ENCODE measurements at regions of chr6 and their contacts with region 1.

Region 1: DNA sequence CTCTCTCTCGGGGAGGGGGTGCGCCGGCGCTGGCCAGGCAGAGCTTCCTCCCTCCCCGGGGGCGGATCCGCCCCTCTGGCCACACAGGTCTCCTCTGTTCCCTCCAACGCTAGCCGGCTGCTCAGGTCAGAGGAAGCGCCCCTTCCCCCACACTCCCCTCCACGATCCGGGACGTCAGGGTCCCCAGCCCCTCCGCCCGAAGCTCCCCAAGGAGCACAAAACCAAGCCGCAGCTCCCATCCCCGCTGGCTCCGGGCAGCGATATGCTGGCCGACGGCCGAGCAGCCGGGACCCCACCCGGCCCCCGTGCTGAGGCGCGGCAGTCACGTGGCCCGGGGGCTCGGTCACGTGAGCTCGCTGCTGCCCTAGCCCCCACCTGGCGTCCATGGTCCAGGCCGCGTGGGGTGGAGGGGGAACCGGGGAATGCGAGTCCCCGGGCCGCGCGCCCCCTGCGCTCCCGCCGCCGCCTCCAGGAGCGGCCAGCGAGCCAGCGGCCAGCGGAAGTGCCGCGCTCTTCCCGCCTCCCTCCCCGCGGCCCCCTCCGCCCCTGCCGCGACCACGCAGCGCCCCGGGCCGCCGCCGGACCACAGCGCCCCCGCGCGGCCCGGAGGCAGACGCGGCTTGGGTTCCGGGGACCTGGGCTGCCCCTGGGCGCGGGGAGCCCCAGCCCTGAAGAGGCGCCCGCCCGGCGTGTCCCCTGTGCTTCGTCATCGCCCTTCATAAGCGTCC is at the start of gene SLC35B2:
- DNase-seq: peak; percentile 69
- total RNA-seq, gene SLC35B2: 73.4 and 80.4 TPM in 2 replicates

Region 2: DNA sequence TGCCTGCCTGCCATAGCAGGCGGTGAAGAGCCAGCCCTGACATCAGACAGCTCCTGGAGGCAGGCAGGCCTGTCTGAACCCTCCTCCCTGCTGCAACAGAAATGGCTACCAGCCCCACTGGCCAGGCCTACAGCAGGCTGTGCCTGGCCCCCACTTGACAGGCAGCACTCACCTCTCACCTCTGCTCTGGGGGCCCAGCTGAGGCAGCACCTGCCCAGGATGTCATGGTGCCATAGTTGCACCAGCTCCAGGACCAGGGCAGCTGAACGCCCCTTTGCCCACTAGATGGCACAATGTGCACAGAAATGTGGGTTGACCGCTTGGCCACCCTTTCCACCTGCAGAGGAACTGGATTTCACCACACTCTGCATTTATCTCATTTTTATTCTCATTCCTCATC is 160.6 kb before region 1 on chr6:
- in situ Hi-C with region 1: loop called (anchors 10 kb)
- DNase-seq: peak; percentile 88

Region 3: DNA sequence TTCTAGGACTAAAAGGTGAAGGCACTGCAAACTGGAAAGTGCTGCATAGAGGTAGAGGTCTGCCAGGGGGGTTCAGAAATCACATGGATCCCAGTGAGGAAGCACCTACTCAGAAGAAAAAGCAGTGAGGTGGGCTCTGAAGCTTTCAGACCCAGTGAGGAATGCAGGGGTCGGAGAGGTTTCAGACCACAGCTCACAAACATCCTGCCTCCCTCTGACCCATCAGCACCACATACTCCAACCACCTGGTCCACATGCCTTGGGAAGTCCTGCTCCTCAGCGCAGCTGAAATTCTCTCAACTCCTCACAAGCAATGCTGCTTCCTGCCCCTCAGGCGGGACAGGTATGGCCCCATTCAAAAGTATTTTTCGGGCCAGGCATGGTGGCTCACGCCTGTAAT is 150.2 kb before region 1 on chr6:
- in situ Hi-C with region 1: no loop called
- DNase-seq: no peak

Region 4: GRCh38 chr6:44338228-44339122 is 81.3 kb after region 1 on chr6:
- in situ Hi-C with region 1: loop called (anchors 5 kb)
- DNase-seq: peak; percentile 88

Measured in G401 (cell line).